CD8-positive, alpha-beta T cell (primary cell): ENCODE measurements at regions of chr9 and their contacts with region 1.

Region 1: DNA sequence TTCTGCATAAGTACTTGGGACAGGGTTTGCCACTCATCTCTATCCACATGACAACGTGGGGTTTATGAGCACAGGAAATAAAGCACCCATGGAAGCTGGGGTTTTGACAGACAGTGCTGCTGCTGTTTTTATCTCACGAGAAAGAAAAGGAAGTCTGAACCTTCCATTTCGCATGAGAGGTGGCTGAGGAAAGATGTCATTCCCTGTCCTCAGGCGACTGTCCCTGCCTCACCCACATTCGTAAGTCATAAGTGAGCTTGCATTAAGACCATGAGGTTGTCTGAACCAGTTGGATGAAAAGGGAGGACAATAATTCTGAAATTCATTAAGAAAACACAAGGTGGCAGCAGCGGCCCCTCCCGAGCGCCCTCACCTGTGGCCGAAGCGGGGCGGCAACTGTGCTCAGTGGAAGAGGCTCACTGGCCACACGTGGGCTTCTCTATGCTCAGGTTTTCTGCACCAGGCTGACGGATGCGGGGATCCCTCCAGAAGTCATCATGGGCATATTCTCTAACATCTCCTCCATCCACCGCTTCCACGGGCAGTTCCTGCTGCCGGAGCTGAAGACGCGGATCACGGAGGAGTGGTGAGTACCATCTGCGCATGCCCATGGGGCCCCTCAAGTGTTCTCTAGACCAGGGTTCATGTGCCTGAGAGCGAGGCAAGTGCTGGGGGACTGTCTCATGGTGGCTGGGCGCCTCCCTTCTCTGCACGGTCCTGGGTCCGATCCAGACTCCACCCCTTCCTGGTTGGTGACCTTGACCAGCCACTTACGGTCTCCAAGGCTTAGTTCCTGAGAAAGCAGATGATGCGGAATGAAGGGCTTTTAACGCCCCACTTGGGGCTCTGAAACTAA is 54.7 kb upstream of the SUSD3 start:
- DNase-seq: peak in 8 of 9 experiments; percentile 41 to 80 (median 70)
- ATAC-seq: peak; percentile 77
- H3K4me3 ChIP-seq: no peak overlapping the region
- H3K4me3 Mint-ChIP-seq: peak overlapping the region; percentile 5
- H3K27ac ChIP-seq: peak overlapping the region; percentile 23 to 41
- H3K27ac Mint-ChIP-seq: peak overlapping the region; percentile 92
- H3K4me1 ChIP-seq: peaks cover 52% of the 10 kb centered on the region
- H3K4me1 Mint-ChIP-seq: peaks cover 54% of the 10 kb centered on the region
- H3K27me3 ChIP-seq: no peaks in the 10 kb centered on the region
- H3K27me3 Mint-ChIP-seq: no peaks in the 10 kb centered on the region
- CTCF ChIP-seq: peak; percentile 56

Region 2: GRCh38 chr9:92954049-92954861 is 49.5 kb before region 1 on chr9:
- CTCF ChIA-PET with region 1: interaction called, 37 read pairs
- POLR2A ChIA-PET with region 1: interaction called, 12 read pairs
- intact Hi-C with region 1: loop called (anchors 1 kb)
- DNase-seq: peak; percentile 53 to 95 (median 87)
- ATAC-seq: peak; percentile 87
- H3K4me3 ChIP-seq: peak overlapping the region; percentile 31 to 39
- H3K4me3 Mint-ChIP-seq: peak overlapping the region; percentile 81
- H3K27ac ChIP-seq: peak overlapping the region; percentile 49 to 71
- H3K27ac Mint-ChIP-seq: peak overlapping the region; percentile 97
- H3K4me1 ChIP-seq: peaks cover 71% of the 10 kb centered on the region
- H3K4me1 Mint-ChIP-seq: peaks cover 79% of the 10 kb centered on the region
- H3K27me3 ChIP-seq: no peaks in the 10 kb centered on the region
- H3K27me3 Mint-ChIP-seq: no peaks in the 10 kb centered on the region
- CTCF ChIP-seq: no peak

Region 3: GRCh38 chr9:92980085-92980745 is 23.6 kb before region 1 on chr9:
- CTCF ChIA-PET with region 1: interaction called, 18 read pairs
- POLR2A ChIA-PET with region 1: interaction called, 9 read pairs
- intact Hi-C with region 1: no loop called
- DNase-seq: no peak
- ATAC-seq: peak; percentile 47
- H3K4me3 ChIP-seq: no peak overlapping the region
- H3K4me3 Mint-ChIP-seq: peak overlapping the region; percentile 38
- H3K27ac ChIP-seq: peak overlapping the region in 1 of 2 experiments; percentile 17
- H3K27ac Mint-ChIP-seq: peak overlapping the region; percentile 90
- H3K4me1 ChIP-seq: peaks cover 65% of the 10 kb centered on the region
- H3K4me1 Mint-ChIP-seq: peaks cover 69% of the 10 kb centered on the region
- H3K27me3 ChIP-seq: no peaks in the 10 kb centered on the region
- H3K27me3 Mint-ChIP-seq: no peaks in the 10 kb centered on the region
- CTCF ChIP-seq: no peak

Region 4: DNA sequence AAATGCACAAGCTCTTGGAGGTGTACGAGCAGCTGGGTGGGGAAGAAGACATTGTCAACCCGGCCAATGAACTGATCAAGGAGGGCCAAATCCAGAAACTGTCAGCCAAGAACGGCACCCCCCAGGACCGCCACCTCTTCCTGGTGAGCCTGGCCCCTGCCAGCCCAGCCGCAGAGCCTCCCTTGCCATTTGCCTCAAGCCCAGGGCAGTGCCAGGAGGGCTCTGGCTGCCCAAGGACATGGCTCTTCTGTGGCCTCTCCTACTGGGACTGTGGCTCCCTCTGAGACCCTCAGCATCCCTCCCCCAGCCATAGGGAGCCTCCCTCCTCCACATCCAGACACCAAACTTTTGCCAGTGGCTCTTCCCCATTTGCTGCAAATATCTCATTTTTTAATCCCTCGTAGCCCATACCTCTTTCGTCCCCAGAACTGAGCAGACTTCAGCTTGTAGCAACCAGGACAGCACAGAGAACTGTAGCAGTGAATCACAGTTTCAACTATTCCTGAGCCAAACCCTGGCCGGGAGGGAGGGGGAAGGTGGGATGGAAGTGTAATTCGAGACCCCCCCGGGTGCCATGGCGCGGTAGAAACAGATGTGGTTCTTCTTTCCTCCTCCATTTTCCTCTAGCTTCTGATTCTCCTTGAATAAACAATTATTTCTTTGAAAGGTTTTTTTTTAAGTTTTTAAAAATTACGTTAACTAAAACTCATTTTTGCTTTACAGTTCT is 10.2 kb after region 1 on chr9:
- CTCF ChIA-PET with region 1: interaction called, 43 read pairs
- POLR2A ChIA-PET with region 1: interaction called, 4 read pairs
- intact Hi-C with region 1: no loop called
- DNase-seq: peak in 1 of 9 experiments; percentile 45
- ATAC-seq: no peak
- H3K4me3 ChIP-seq: no peak overlapping the region
- H3K4me3 Mint-ChIP-seq: no peak overlapping the region
- H3K27ac ChIP-seq: no peak overlapping the region
- H3K27ac Mint-ChIP-seq: peak overlapping the region; percentile 78
- H3K4me1 ChIP-seq: no peaks in the 10 kb centered on the region
- H3K4me1 Mint-ChIP-seq: peaks cover 17% of the 10 kb centered on the region
- H3K27me3 ChIP-seq: no peaks in the 10 kb centered on the region
- H3K27me3 Mint-ChIP-seq: no peaks in the 10 kb centered on the region
- CTCF ChIP-seq: no peak

Region 5: DNA sequence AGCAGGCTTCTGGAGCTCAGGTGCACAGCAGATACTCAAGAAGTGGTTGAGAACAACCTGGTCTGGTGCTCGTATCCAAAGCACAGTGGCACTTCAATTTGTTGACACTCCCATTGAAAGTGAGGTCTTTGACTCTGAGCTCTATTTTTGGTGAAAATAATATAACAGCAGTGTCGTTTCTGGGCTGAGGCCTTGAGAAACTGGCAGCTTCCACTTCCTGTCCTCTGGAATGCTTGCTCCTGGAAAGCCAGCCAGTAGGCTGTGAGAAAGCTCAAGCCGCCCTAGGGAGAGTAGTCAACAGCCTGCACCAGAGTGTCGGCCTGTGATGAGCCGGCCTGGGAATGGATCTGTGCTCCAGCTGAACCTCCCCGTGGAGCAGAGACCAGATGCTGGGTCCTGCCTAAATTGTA is 47.9 kb after region 1 on chr9:
- CTCF ChIA-PET with region 1: interaction called, 10 read pairs
- POLR2A ChIA-PET with region 1: no interaction called
- intact Hi-C with region 1: no loop called
- DNase-seq: no peak
- ATAC-seq: no peak
- H3K4me3 ChIP-seq: no peak overlapping the region
- H3K4me3 Mint-ChIP-seq: no peak overlapping the region
- H3K27ac ChIP-seq: no peak overlapping the region
- H3K27ac Mint-ChIP-seq: peak overlapping the region; percentile 21
- H3K4me1 ChIP-seq: peaks cover 48% of the 10 kb centered on the region
- H3K4me1 Mint-ChIP-seq: peaks cover 53% of the 10 kb centered on the region
- H3K27me3 ChIP-seq: no peaks in the 10 kb centered on the region
- H3K27me3 Mint-ChIP-seq: no peaks in the 10 kb centered on the region
- CTCF ChIP-seq: no peak

Region 6: DNA sequence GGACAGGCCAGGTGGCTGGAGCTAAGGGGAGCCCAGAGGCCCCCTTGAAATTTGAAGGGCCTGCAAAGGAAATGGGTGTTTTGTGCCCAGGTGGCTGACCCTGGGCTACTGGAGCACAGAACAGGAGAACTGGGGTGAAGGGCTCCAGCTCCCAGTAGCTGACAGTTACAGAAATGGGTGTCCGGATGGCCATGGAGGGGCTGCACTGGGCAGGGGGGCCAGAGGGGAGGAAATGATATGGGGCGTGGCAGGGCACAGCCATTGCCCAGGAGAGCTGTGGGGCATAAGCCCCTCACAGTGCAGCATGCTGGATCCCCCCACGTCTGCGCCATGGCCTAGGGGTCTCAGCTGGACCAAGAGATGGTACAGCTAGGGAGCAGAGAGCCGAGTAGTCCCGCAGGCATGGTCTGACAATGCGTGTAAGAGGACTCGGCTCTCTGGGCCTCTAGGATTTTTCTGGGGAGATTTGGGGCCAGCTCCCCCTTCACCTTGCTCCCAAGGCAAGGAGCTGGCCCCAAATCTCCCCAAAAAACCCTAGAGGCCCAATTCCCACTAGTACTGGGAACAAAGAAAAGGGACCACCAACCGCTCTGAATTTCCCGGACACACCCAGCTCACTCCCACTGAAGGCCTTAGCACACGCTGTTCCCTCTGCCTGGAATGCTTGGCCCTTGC is 84.3 kb after region 1 on chr9:
- CTCF ChIA-PET with region 1: interaction called, 12 read pairs
- POLR2A ChIA-PET with region 1: no interaction called
- intact Hi-C with region 1: no loop called
- DNase-seq: peak in 1 of 9 experiments; percentile 42
- ATAC-seq: no peak
- H3K4me3 ChIP-seq: no peak overlapping the region
- H3K4me3 Mint-ChIP-seq: no peak overlapping the region
- H3K27ac ChIP-seq: no peak overlapping the region
- H3K27ac Mint-ChIP-seq: peak overlapping the region; percentile 76
- H3K4me1 ChIP-seq: peaks cover 20% of the 10 kb centered on the region
- H3K4me1 Mint-ChIP-seq: peaks cover 35% of the 10 kb centered on the region
- H3K27me3 ChIP-seq: peaks cover 0 to 2% of the 10 kb centered on the region in 2 experiments
- H3K27me3 Mint-ChIP-seq: no peaks in the 10 kb centered on the region
- CTCF ChIP-seq: no peak

Region 7: DNA sequence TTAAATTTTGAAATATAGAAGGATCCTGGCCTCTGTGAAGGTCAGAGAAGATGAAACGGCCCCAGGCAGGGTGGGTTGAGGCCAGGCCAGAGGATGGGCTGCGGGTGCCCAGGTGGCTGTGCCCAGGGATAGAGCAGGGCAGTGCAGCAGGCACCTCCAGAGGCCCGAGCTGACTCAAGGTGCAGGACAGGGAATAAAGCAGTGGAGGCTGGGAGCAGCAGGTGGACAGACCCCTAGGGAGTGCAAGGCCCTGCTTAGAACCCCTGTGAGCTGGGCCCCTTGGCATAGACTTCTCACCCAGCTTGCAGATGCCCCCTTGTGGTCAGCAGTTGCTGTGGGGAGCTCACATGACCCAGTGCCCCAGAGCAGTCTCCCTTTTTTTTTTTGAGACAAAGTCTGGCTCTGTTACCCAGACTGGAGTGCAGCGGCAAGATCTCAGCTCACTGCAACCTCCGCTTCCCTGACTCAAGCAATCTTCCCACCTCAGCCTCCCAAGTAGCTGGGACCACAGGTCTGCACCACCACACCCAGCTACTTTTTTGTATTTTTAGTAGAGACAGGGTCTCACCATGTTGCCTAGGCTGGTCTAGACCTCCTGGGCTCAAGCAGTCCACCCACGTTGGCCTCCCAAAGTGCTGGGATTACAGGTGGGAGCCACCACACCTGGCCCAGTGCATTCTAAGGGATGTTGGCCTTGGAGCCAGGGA is 298.9 kb after region 1 on chr9:
- CTCF ChIA-PET with region 1: interaction called, 6 read pairs
- POLR2A ChIA-PET with region 1: no interaction called
- intact Hi-C with region 1: loop called (anchors 1 kb)
- DNase-seq: peak; percentile 30 to 79 (median 63)
- ATAC-seq: peak; percentile 92
- H3K4me3 ChIP-seq: no peak overlapping the region
- H3K4me3 Mint-ChIP-seq: no peak overlapping the region
- H3K27ac ChIP-seq: no peak overlapping the region
- H3K27ac Mint-ChIP-seq: no peak overlapping the region
- H3K4me1 ChIP-seq: no peaks in the 10 kb centered on the region
- H3K4me1 Mint-ChIP-seq: no peaks in the 10 kb centered on the region
- H3K27me3 ChIP-seq: no peaks in the 10 kb centered on the region
- H3K27me3 Mint-ChIP-seq: no peaks in the 10 kb centered on the region
- CTCF ChIP-seq: peak; percentile 49